T-cell (primary cell): ENCODE measurements at regions of chr1 and their contacts with region 1.

Region 1: DNA sequence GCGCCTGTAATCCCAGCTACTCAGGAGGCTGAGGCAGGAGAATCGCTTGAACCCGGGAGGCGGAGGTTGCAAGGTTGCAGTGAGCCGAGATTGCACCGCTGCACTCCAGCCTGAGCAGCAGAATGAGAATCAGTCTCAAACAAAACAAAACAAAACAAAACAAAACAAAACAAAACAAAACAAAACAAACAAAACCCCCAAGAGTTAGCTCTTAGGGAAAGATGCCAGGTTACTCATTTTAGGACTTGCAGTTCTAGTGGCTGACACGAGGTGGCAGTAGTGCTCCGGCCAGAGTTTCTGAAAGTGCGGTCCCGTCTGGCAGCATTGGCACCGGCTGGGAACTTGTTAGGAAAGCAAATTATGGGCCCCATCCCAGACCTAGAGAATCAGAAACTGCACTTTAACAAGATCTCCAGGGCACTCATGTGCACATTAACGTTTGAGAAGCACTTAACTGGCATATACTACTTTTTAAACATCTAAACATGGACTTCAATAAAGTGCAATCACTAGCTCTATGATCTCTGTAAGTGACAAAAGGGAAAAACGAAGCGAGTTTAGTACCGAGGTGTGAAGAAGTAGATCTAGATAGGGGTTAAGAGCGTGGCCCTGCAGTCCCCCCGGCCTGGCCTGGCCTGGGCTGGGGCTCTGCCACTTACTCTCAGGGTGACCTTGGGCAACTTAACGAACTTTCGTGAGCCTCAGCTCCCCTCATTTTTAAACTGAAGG is 41.9 kb upstream of the TNFRSF1B start:
- DNase-seq: peak; percentile 35 to 89 (median 73)
- ATAC-seq: peak; percentile 52 to 70 (median 66)
- H3K4me3 ChIP-seq: no peak overlapping the region
- H3K4me3 Mint-ChIP-seq: peak overlapping the region in 2 of 3 donors; percentile 11 to 31
- H3K27ac ChIP-seq: no peak overlapping the region
- H3K27ac Mint-ChIP-seq: peak overlapping the region; percentile 73 to 75
- H3K4me1 ChIP-seq: peaks cover 19 to 48% of the 10 kb centered on the region in 2 experiments
- H3K4me1 Mint-ChIP-seq: peaks cover 43 to 58% (median 48%) of the 10 kb centered on the region in 3 donors
- H3K27me3 ChIP-seq: peaks cover 0 to 4% of the 10 kb centered on the region in 2 experiments
- H3K27me3 Mint-ChIP-seq: no peaks in the 10 kb centered on the region

Region 2: GRCh38 chr1:12001249-12001917 is 123.5 kb before region 1 on chr1:
- CTCF ChIA-PET with region 1: no interaction called
- POLR2A ChIA-PET with region 1: no interaction called
- DNase-seq: peak in 17 of 35 experiments; percentile 7 to 54 (median 24)
- ATAC-seq: no peak
- H3K4me3 ChIP-seq: no peak overlapping the region
- H3K4me3 Mint-ChIP-seq: no peak overlapping the region
- H3K27ac ChIP-seq: no peak overlapping the region
- H3K27ac Mint-ChIP-seq: no peak overlapping the region
- H3K4me1 ChIP-seq: no peaks in the 10 kb centered on the region
- H3K4me1 Mint-ChIP-seq: no peaks in the 10 kb centered on the region
- H3K27me3 ChIP-seq: no peaks in the 10 kb centered on the region
- H3K27me3 Mint-ChIP-seq: no peaks in the 10 kb centered on the region

Region 3: GRCh38 chr1:12075195-12076114 is 49.4 kb before region 1 on chr1:
- CTCF ChIA-PET with region 1: no interaction called
- POLR2A ChIA-PET with region 1: no interaction called
- DNase-seq: no peak
- ATAC-seq: no peak
- H3K4me3 ChIP-seq: no peak overlapping the region
- H3K4me3 Mint-ChIP-seq: no peak overlapping the region
- H3K27ac ChIP-seq: no peak overlapping the region
- H3K27ac Mint-ChIP-seq: no peak overlapping the region
- H3K4me1 ChIP-seq: peaks cover 0 to 9% of the 10 kb centered on the region in 2 experiments
- H3K4me1 Mint-ChIP-seq: peaks cover 0 to 13% (median 3%) of the 10 kb centered on the region in 3 donors
- H3K27me3 ChIP-seq: peaks cover 0 to 29% of the 10 kb centered on the region in 2 experiments
- H3K27me3 Mint-ChIP-seq: peaks cover 0 to 3% of the 10 kb centered on the region in 2 donors

Region 4: DNA sequence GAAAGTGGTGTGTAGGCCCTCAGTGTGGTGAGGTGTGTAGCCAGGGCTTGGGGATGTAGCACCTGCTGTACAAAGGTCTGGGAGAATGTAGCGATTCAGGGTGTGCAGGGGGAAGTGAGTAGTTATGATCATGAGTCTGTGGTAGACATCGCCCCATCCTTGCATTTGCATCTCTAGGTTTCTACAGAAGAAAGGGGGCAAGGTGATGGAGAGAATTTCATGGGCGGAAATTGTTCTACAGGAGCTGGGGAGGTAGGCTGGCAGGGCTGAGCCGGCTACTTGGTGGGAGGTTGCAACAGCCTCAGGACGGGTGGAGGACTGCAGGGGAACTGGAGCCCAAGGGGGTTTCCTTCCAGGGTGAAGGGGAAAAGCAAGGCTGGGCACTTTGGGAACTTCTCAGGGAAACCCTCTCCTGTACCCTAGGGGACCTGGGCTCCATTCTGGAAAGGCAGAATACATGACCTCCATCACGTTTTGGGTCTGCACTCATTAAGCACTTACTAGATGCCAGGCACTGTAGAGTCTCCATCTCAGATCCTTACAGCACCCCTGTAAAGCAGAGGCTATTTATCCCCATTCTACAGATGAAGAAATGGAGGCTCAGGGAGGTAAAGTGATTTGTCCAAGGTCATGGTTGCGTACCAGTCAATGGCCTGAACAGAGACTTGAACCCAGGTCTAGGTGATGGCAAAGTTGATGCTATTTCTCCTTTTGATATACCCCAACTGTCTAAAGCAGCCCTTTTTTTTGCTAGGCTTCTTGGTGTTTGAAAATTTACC is 27.4 kb after region 1 on chr1:
- CTCF ChIA-PET with region 1: interaction called, 3 to 10 read pairs
- POLR2A ChIA-PET with region 1: interaction called in 1 of 2 experiments, 3 read pairs
- DNase-seq: peak in 1 of 35 experiments; percentile 31
- ATAC-seq: no peak
- H3K4me3 ChIP-seq: no peak overlapping the region
- H3K4me3 Mint-ChIP-seq: peak overlapping the region; percentile 11 to 59 (median 26)
- H3K27ac ChIP-seq: peak overlapping the region; percentile 93
- H3K27ac Mint-ChIP-seq: peak overlapping the region; percentile 97 to 100
- H3K4me1 ChIP-seq: peaks cover 58 to 80% of the 10 kb centered on the region in 2 experiments
- H3K4me1 Mint-ChIP-seq: peaks cover 87 to 92% (median 88%) of the 10 kb centered on the region in 3 donors
- H3K27me3 ChIP-seq: no peaks in the 10 kb centered on the region
- H3K27me3 Mint-ChIP-seq: no peaks in the 10 kb centered on the region

Region 5: DNA sequence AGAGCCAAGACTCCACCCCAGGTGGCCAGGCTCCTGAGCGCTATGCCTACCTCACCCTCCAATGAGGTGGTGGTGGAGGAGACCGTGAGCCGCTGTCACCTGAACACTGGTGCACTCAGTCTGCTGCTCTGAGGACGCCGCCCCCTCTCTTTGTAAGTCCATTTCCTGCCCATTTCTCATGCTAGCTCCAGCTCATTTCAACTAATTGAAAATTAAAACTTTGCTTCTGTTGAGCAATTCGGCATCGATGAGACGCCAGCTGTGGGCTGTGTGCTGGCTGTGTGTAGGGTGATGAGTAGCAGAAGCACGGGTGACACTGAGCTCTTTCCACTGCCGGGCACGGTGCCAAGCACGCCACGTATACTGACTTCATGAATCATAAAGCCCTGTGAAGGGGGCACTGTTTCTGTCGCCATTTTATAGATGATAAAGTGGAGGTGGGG is 53.2 kb after region 1 on chr1:
- CTCF ChIA-PET with region 1: interaction called, 5 to 37 read pairs
- POLR2A ChIA-PET with region 1: interaction called, 3 read pairs
- DNase-seq: peak; percentile 77 to 97 (median 88)
- ATAC-seq: peak; percentile 68 to 78 (median 72)
- H3K4me3 ChIP-seq: peak overlapping the region; percentile 37 to 51
- H3K4me3 Mint-ChIP-seq: peak overlapping the region; percentile 76 to 92 (median 78)
- H3K27ac ChIP-seq: peak overlapping the region; percentile 95
- H3K27ac Mint-ChIP-seq: peak overlapping the region; percentile 90 to 95
- H3K4me1 ChIP-seq: peaks cover 48 to 100% of the 10 kb centered on the region in 2 experiments
- H3K4me1 Mint-ChIP-seq: peaks cover 89 to 97% (median 96%) of the 10 kb centered on the region in 3 donors
- H3K27me3 ChIP-seq: no peaks in the 10 kb centered on the region
- H3K27me3 Mint-ChIP-seq: no peaks in the 10 kb centered on the region

Region 6: DNA sequence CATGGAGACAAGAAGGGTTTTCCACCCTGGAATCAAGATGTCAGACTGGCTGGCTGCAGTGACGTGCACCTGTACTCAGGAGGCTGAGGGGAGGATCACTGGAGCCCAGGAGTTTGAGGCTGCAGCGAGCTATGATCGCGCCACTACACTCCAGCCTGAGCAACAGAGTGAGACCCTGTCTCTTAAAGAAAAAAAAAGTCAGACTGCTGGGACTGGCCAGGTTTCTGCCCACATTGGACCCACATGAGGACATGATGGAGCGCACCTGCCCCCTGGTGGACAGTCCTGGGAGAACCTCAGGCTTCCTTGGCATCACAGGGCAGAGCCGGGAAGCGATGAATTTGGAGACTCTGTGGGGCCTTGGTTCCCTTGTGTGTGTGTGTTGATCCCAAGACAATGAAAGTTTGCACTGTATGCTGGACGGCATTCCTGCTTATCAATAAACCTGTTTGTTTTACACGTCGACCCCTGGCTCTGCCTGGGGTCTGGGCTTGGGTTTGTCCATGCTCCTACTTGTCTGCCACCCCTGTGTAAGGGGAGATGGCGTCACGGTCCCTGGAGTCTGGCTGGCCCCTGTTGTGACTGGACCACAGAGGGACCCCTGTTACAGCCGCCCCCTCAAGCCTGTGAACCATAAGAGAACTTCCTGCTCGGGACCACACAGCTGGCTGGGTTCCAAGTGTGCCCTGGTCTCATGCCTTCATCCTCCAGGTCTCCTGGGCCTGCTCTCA is 84.1 kb after region 1 on chr1:
- CTCF ChIA-PET with region 1: interaction called, 17 to 74 read pairs
- POLR2A ChIA-PET with region 1: no interaction called
- DNase-seq: peak; percentile 52 to 91 (median 80)
- ATAC-seq: peak; percentile 61 to 73 (median 68)
- H3K4me3 ChIP-seq: no peak overlapping the region
- H3K4me3 Mint-ChIP-seq: peak overlapping the region in 1 of 3 donors; percentile 44
- H3K27ac ChIP-seq: peak overlapping the region; percentile 32
- H3K27ac Mint-ChIP-seq: peak overlapping the region; percentile 72 to 73
- H3K4me1 ChIP-seq: peaks cover 18 to 58% of the 10 kb centered on the region in 2 experiments
- H3K4me1 Mint-ChIP-seq: peaks cover 40 to 66% (median 58%) of the 10 kb centered on the region in 3 donors
- H3K27me3 ChIP-seq: no peaks in the 10 kb centered on the region
- H3K27me3 Mint-ChIP-seq: no peaks in the 10 kb centered on the region